ENCODE measurements at regions of chr14 and their contacts with region 1.

Region 1: GRCh38 chr14:101761032-101761880 is at the start of gene PPP2R5C:
- DNase-seq: peak; percentile 88
- H3K4me3 Mint-ChIP-seq: peak within 1 kb of the TSS; percentile 83
- H3K27ac Mint-ChIP-seq: peak within 1 kb of the TSS; percentile 73
- H3K4me1 Mint-ChIP-seq: peaks cover 39% of the 10 kb centered on the region
- H3K27me3 Mint-ChIP-seq: peaks cover 12% of the 10 kb centered on the region
- total RNA-seq, gene PPP2R5C: 338 to 348 TPM

Region 2: DNA sequence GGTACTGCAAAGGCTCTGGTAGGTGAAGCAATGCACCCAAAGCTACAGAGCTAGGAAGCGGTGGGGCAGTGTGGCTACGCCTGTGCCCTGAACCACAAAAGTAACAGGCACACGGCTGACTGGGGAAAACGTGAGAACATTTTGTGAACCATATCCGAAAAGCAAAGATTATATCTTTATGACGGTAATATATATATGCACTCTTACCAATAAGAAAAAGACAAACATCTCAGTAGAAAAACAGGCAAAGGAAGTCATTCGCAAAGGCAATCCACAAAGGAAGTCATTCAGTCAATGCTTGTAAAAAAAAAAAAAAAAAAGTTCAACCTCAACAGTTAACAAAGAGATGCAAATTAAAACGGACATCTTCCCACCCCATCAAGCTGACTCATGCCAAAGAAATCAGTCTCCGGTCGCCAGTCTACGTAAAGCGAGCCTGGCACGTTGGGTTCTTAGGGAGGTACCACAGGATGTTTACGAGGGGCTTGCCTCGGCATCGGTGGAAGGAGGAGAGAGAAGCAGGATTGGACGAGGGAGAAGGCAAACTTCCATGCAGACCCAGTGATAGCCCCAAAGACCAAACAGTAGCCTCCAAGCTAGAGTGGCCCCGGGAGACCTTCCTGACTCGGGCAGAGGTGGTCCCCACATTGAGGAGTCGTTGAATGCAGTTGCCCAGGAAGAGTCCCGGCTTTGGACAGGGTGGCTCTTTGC is 39.1 kb before region 1 on chr14:
- CTCF ChIA-PET with region 1: interaction called, 9 read pairs
- POLR2A ChIA-PET with region 1: interaction called, 10 read pairs
- DNase-seq: peak; percentile 89
- H3K4me3 Mint-ChIP-seq: peak overlapping the region; percentile 74
- H3K27ac Mint-ChIP-seq: peak overlapping the region; percentile 100
- H3K4me1 Mint-ChIP-seq: peaks cover 44% of the 10 kb centered on the region
- H3K27me3 Mint-ChIP-seq: no peaks in the 10 kb centered on the region

Region 3: GRCh38 chr14:101731187-101732080 is 29.8 kb before region 1 on chr14:
- CTCF ChIA-PET with region 1: interaction called, 3 read pairs
- POLR2A ChIA-PET with region 1: interaction called, 17 read pairs
- DNase-seq: peak; percentile 85
- H3K4me3 Mint-ChIP-seq: peak overlapping the region; percentile 70
- H3K27ac Mint-ChIP-seq: peak overlapping the region; percentile 96
- H3K4me1 Mint-ChIP-seq: peaks cover 48% of the 10 kb centered on the region
- H3K27me3 Mint-ChIP-seq: no peaks in the 10 kb centered on the region

Measured in activated CD4-positive, alpha-beta memory T cell treated with anti-CD3 and anti-CD28 coated beads, Interleukin-2, amount 10 ng/mL, durations not matched to agents 7 days and 5 days (primary cell).